GM12878 (cell line): ENCODE measurements at regions of chr1 and their contacts with region 1.

Region 1: GRCh38 chr1:153532769-153533599 is 2.8 kb downstream of the S100A6 start:
- DNase-seq: no peak
- ATAC-seq: peak; percentile 51
- H3K4me3 ChIP-seq: no peak overlapping the region
- H3K27ac ChIP-seq: no peak overlapping the region
- H3K4me1 ChIP-seq: peaks cover 12% of the 10 kb centered on the region
- H3K27me3 ChIP-seq: no peaks in the 10 kb centered on the region
- CTCF ChIP-seq: peak; percentile 73 to 86 (median 73)
- EP300 ChIP-seq: no peak
- POLR2A ChIP-seq: no peak
- RAD21 ChIP-seq: peak; percentile 74

Region 2: DNA sequence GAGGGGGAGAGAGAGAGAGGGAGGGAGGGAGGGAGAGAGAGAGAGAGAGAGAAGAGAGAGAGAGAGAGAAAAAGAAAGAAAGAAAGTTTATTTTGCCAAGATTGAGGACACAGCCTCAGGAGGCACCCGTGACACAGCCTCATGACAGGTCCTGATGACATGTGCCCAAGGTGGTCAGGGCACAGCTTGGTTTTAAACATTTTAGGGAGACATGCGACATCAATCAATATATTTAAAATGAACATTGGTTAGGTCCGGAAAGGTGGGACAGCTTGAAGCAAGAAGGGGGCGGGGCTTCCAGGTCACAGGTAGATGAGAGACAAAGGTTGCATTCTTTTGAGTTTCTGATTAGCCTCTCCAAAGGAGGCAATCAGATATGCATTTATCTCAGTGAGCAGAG is 12.8 kb before region 1 on chr1:
- CTCF ChIA-PET with region 1: interaction called, 19 read pairs
- POLR2A ChIA-PET with region 1: interaction called, 7 read pairs
- RAD21 ChIA-PET with region 1: no interaction called
- SMC1A ChIA-PET with region 1: interaction called, 17 read pairs
- in situ Hi-C with region 1: no loop called
- intact Hi-C with region 1: no loop called
- DNase-seq: no peak
- ATAC-seq: no peak
- H3K4me3 ChIP-seq: no peak overlapping the region
- H3K27ac ChIP-seq: no peak overlapping the region
- H3K4me1 ChIP-seq: no peaks in the 10 kb centered on the region
- H3K27me3 ChIP-seq: no peaks in the 10 kb centered on the region
- CTCF ChIP-seq: no peak
- EP300 ChIP-seq: no peak
- POLR2A ChIP-seq: no peak
- RAD21 ChIP-seq: no peak

Region 3: GRCh38 chr1:153545067-153546055 is 12.4 kb after region 1 on chr1 and contains the start of gene S100A4:
- CTCF ChIA-PET with region 1: interaction called, 46 read pairs
- POLR2A ChIA-PET with region 1: interaction called, 29 read pairs
- RAD21 ChIA-PET with region 1: interaction called, 38 read pairs
- SMC1A ChIA-PET with region 1: interaction called, 18 read pairs
- in situ Hi-C with region 1: no loop called
- intact Hi-C with region 1: no loop called
- DNase-seq: peak; percentile 46
- ATAC-seq: peak; percentile 85
- H3K4me3 ChIP-seq: no peak within 1 kb of the TSS
- H3K27ac ChIP-seq: no peak within 1 kb of the TSS
- H3K4me1 ChIP-seq: peaks cover 25% of the 10 kb centered on the region
- H3K27me3 ChIP-seq: no peaks in the 10 kb centered on the region
- CTCF ChIP-seq: no peak
- EP300 ChIP-seq: no peak
- POLR2A ChIP-seq: peak; percentile 58; the same call in 1 of the 2 replicates
- RAD21 ChIP-seq: no peak
- polyA plus RNA-seq, gene S100A4: 73.9 to 104 TPM

Region 4: DNA sequence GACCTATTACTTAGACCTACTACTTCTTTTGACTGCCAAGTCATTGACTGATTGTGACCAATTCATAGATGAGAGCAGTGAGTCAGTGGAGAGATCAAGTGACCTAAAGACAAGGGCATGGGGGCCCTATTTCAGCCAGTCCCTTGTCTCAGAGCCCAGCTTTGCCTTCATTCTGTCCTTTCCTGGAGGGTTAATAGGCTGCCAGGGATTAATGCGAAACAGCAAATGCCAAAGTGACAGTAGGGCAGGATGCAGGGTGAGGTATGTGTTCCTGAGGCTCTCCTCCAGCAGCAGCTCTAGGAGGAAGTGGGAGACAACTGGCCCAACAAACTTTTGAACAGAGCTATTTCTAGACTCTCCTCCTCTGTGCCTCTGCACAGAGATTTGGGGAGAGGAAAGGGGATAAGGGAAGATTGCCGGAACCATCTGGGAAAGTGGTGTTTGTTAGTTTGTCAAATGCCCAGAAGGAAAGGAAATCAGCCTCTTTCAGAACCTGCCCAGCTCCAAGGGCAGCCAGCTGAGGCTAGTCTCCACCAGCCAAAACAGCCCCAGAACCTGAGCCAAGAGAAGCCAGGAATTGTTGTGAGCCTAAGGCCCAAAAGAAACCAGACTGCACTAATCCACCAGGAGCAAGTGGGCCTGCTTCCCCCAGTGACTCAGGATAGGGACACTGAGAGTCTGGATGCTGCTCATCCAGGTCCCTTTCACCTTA is 21.0 kb after region 1 on chr1:
- CTCF ChIA-PET with region 1: interaction called, 113 read pairs
- POLR2A ChIA-PET with region 1: no interaction called
- RAD21 ChIA-PET with region 1: interaction called, 17 read pairs
- SMC1A ChIA-PET with region 1: interaction called, 15 read pairs
- in situ Hi-C with region 1: no loop called
- intact Hi-C with region 1: no loop called
- DNase-seq: no peak
- ATAC-seq: no peak
- H3K4me3 ChIP-seq: no peak overlapping the region
- H3K27ac ChIP-seq: no peak overlapping the region
- H3K4me1 ChIP-seq: no peaks in the 10 kb centered on the region
- H3K27me3 ChIP-seq: no peaks in the 10 kb centered on the region
- CTCF ChIP-seq: no peak
- EP300 ChIP-seq: no peak
- POLR2A ChIP-seq: no peak
- RAD21 ChIP-seq: no peak

Region 5: DNA sequence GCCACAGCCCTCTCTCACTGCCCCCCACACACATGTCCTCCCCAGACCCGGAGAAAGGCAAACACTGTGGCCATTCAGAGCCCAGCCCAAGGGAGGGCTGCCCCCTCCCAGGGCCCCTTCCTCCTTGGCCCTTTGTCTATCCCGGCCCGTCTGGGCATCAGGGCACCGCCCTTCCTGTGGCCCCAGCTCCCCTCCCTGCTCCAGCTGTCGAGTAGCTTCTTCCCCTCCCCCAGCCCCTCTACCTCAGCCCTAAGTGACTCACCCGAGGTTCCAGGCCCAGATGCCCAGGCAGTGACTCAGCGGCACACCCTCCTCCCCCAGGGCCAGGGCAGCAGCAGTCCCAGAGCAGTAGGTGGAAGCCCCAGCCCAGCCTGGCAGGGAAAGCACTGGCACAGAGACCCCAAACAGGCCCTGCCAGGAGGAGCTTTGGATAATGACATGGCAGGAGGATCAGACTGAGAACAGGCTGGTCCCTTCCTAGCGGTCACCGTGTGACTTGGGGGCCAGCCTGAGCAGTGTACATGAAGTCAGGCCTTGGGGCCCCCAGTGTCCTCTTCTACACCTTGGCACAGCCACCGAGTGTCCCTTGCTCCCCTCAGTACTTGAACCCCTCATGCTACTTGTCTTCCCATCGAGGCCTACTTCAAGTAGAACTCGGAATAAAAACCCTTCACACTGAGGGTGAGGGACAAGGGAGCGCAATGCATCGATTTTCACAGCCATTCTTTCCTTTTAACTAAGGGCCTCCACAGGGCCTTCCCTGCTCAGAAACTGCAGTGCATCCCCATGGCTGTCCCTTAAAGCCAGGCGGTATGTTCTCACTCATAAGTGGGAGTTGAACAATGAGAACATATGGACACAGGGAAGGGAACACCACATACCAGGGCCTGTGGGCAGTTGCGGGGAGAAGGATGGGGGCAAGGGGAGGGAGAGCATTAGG is 33.7 kb after region 1 on chr1:
- CTCF ChIA-PET with region 1: interaction called, 216 read pairs
- POLR2A ChIA-PET with region 1: interaction called, 13 read pairs
- RAD21 ChIA-PET with region 1: interaction called, 74 read pairs
- SMC1A ChIA-PET with region 1: interaction called, 72 read pairs
- in situ Hi-C with region 1: no loop called
- intact Hi-C with region 1: loop called (anchors 5 kb)
- DNase-seq: peak; percentile 37
- ATAC-seq: peak; percentile 79
- H3K4me3 ChIP-seq: no peak overlapping the region
- H3K27ac ChIP-seq: 0 out of 2 replicates have a peak overlapping the region, but pooled peaks have one; percentile 11
- H3K4me1 ChIP-seq: peaks cover 15% of the 10 kb centered on the region
- H3K27me3 ChIP-seq: no peaks in the 10 kb centered on the region
- CTCF ChIP-seq: no peak
- EP300 ChIP-seq: no peak
- POLR2A ChIP-seq: no peak; the same call in 1 of the 2 replicates
- RAD21 ChIP-seq: no peak

Region 6: DNA sequence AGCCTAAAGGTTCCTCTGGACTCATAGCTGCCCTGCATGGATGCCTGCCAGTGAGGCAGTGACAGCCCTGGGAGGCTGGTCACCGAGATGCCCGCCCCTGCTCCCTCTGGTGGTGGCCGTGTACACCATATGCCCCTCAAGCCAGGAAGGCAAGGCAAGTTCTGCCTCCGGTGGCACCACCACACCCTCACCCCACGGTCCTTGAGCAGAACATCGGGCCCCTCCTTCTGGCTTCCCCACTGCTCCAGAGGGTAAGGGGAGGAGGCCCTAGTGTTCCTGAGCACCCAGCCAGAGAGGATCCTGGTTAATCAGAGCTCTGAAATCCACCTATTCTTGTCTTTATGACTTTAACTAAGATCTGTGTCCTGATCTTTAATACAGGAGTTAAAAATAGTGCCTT is 84.7 kb after region 1 on chr1:
- CTCF ChIA-PET with region 1: interaction called, 14 read pairs
- POLR2A ChIA-PET with region 1: no interaction called
- RAD21 ChIA-PET with region 1: interaction called, 4 read pairs
- SMC1A ChIA-PET with region 1: interaction called, 3 read pairs
- in situ Hi-C with region 1: no loop called
- intact Hi-C with region 1: no loop called
- DNase-seq: no peak
- ATAC-seq: peak; percentile 94
- H3K4me3 ChIP-seq: no peak overlapping the region
- H3K27ac ChIP-seq: no peak overlapping the region
- H3K4me1 ChIP-seq: peaks cover 15% of the 10 kb centered on the region
- H3K27me3 ChIP-seq: no peaks in the 10 kb centered on the region
- CTCF ChIP-seq: peak; percentile 49 to 69 (median 57)
- EP300 ChIP-seq: no peak
- POLR2A ChIP-seq: no peak
- RAD21 ChIP-seq: peak; percentile 36; the same call in 1 of the 2 replicates

Region 7: GRCh38 chr1:153626922-153627796 is 94.2 kb after region 1 on chr1 and contains the start of gene S100A13:
- CTCF ChIA-PET with region 1: interaction called, 14 read pairs
- POLR2A ChIA-PET with region 1: no interaction called
- RAD21 ChIA-PET with region 1: interaction called, 4 read pairs
- SMC1A ChIA-PET with region 1: interaction called, 6 read pairs
- in situ Hi-C with region 1: no loop called
- intact Hi-C with region 1: no loop called
- DNase-seq: no peak
- ATAC-seq: peak; percentile 80
- H3K4me3 ChIP-seq: no peak within 1 kb of the TSS
- H3K27ac ChIP-seq: no peak within 1 kb of the TSS
- H3K4me1 ChIP-seq: peaks cover 14% of the 10 kb centered on the region
- H3K27me3 ChIP-seq: no peaks in the 10 kb centered on the region
- CTCF ChIP-seq: peak; percentile 49 to 66 (median 56)
- EP300 ChIP-seq: no peak
- POLR2A ChIP-seq: peak; percentile 29; the same call in 1 of the 2 replicates
- RAD21 ChIP-seq: peak; percentile 41; the same call in 1 of the 2 replicates
- polyA plus RNA-seq, gene S100A13: 29.7 to 30.9 TPM